Posterior cingulate gyrus (tissue), 11 donors: ENCODE measurements at regions of chr4 and their contacts with region 1.

Region 1: GRCh38 chr4:112853662-112854256 is 195.7 kb upstream of the ANK2 start:
- DNase-seq: no peak

Region 2: DNA sequence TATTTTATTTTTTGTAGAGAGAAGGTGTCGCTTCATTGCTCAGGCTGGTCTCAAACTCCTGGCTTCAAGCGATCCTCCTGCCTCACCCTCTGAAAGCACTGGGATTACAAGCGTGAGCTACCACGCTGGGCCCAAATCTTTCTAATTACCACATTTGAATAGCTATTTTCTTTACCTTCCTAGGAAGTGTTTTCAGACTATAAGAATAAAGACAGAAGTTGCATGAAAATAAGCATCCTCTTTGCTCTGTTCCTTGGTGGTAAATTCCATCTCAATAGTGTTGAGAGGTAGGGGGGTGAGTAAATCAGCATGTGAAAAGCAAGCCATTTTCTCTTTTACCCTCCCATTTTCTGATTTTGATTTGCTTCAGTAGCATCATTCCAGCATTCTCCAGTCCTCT is 94.4 kb before region 1 on chr4:
- intact Hi-C with region 1: no loop called
- DNase-seq: no peak

Region 3: GRCh38 chr4:112889619-112890527 is 36.1 kb after region 1 on chr4:
- intact Hi-C with region 1: loop called (anchors 5 kb)
- DNase-seq: no peak

Region 4: DNA sequence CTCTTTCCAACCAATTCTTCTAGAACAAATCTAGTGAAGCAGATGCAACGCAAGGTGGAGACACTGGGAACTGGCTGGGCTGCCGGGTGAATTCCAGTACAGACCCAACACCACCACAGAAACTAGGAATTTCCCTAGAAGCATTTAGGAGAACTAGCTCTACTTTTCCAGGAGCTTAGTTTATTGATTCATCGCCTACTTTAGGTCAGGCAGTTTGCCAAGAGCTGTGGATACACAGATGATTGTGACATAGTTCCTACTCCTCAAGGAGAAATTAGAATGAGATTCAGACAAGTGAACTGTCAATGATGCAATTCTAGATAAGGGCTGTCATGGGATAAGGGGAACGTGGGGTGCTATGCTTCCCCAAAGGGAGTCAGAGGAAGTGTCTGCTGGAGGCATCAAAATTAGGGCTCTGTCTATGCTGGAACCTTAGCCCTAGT is 557.8 kb after region 1 on chr4:
- intact Hi-C with region 1: no loop called
- DNase-seq: no peak